Upper lobe of right lung (tissue), 1 donor: ENCODE measurements at regions of chr1 and their contacts with region 1.

Region 1: DNA sequence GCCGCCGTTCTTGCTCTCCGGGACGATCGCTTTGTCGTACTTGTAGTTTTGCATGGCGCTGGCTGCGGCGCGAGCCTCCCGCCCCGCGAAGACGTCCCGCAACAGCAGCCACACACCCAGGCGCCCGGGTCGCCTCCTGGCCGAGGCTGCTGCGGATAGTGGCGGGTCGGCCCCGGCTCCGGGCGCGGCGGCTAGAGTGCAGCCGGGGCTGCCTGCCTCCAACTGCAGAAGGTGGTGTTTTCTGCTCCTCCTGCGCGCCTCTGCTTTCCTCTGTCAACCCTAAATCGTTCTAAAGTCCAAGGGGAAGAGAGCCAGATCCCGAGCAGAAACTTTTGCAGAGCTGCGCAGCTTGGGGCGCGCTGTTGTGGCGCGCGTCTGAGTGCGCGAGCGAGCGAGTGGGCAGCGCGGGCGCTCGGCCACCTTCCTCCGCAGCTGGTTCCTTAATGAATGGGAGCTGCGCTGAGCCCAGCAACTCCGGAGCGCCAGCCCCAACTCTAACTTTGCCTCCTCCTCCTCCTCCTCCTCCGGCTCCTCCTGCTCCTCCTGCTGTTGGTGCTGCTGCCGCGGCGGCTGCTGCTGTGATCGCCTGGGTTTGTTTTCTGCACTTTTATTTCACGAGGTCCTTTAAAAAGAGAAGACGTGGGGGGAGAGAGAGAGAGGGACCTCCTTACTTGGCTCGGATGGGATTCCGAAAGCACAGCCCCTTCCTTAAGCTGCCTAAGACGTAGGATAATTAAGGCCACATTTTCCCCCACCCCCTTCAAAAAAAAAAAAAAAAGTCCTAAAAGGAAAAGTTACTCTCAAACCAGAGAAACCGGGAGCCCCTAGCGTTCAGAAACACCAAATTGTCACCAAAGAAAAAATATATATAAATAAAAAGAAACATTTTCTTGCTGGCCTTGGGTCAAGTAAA is at the start of gene PLPP3:
- DNase-seq: peak; percentile 91
- ATAC-seq: peak; percentile 94
- H3K4me3 ChIP-seq: peak within 1 kb of the TSS; percentile 83
- H3K27ac ChIP-seq: peak within 1 kb of the TSS; percentile 94
- H3K4me1 ChIP-seq: no peaks in the 10 kb centered on the region
- H3K27me3 ChIP-seq: no peaks in the 10 kb centered on the region
- CTCF ChIP-seq: peak; percentile 55
- total RNA-seq, gene PLPP3: 124 TPM

Region 2: DNA sequence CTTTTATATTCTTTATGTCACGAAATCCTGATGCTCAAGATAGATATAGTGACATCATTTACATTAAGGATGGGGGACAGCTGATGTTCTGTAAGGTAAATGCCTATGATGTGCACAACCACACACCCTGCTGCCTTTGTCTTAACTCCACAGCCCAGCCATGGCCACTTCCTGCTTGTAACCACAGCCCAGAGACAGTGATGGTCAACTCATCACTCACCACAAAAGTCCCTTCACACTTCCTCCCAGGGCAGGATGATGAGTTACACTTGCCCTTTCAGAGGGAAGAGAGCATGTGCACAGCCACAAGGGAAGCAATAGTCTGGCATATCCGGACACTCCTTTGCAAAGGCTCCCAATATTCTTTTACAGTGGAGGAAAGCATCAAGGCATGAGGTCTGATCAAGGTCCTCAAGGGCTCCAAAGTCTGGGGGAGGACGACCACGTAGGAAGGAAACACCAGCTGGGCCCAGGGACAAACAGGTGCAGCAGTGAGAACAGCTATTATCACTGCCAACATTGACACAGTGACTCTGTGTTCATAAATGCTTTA is 53.7 kb before region 1 on chr1:
- intact Hi-C with region 1: loop called (anchors 10 kb)
- DNase-seq: no peak
- ATAC-seq: peak; percentile 96
- H3K4me3 ChIP-seq: no peak overlapping the region
- H3K27ac ChIP-seq: no peak overlapping the region
- H3K4me1 ChIP-seq: peaks cover 37% of the 10 kb centered on the region
- H3K27me3 ChIP-seq: no peaks in the 10 kb centered on the region
- CTCF ChIP-seq: no peak

Region 3: DNA sequence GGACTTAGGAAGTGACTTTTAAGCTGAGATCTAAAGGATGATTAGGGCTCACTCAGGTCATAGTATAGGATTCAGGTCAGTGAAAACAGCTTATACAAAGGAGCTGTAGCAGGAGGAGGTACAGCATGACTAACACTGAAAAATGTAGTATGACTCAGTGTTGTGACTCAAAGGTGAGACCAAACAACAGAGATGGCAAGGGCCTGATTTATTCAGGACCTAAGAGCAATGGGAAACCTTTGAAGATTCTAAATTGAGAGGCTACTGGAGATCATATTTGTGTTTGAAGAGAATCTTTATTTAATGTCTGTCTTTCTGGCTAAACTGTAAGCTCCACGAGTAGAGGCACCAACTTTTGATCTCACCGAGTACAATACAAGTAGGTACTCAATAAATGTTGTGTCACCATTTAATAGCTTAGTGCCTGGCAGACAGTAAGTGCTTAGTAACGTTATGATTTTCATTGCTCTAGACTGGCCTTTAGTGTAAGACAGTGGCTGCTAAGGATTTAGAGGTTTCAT is 109.3 kb after region 1 on chr1:
- intact Hi-C with region 1: no loop called
- DNase-seq: no peak
- ATAC-seq: peak; percentile 39
- H3K4me3 ChIP-seq: no peak overlapping the region
- H3K27ac ChIP-seq: no peak overlapping the region
- H3K4me1 ChIP-seq: no peaks in the 10 kb centered on the region
- H3K27me3 ChIP-seq: no peaks in the 10 kb centered on the region
- CTCF ChIP-seq: no peak